PC-9 (cell line): ENCODE measurements at regions of chr17 and their contacts with region 1.

Region 1: GRCh38 chr17:65988081-65988850 is 203.7 kb downstream of the CEP112 start:
- DNase-seq: peak; percentile 8 to 60
- H3K4me3 ChIP-seq: no peak overlapping the region
- H3K27ac ChIP-seq: no peak overlapping the region
- H3K4me1 ChIP-seq: no peaks in the 10 kb centered on the region
- H3K27me3 ChIP-seq: no peaks in the 10 kb centered on the region
- CTCF ChIP-seq: peak; percentile 89

Region 2: GRCh38 chr17:64992325-64992811 is 995.9 kb before region 1 on chr17:
- CTCF ChIA-PET with region 1: interaction called, 19 read pairs
- POLR2A ChIA-PET with region 1: no interaction called
- intact Hi-C with region 1: no loop called
- DNase-seq: peak; percentile 95 to 99
- H3K4me3 ChIP-seq: no peak overlapping the region
- H3K27ac ChIP-seq: peak overlapping the region; percentile 86
- H3K4me1 ChIP-seq: peaks cover 60% of the 10 kb centered on the region
- H3K27me3 ChIP-seq: no peaks in the 10 kb centered on the region
- CTCF ChIP-seq: no peak

Region 3: GRCh38 chr17:65231662-65232335 is 756.5 kb before region 1 on chr17:
- CTCF ChIA-PET with region 1: no interaction called
- POLR2A ChIA-PET with region 1: no interaction called
- intact Hi-C with region 1: loop called (anchors 2 kb)
- DNase-seq: peak; percentile 63 to 78
- H3K4me3 ChIP-seq: no peak overlapping the region
- H3K27ac ChIP-seq: no peak overlapping the region
- H3K4me1 ChIP-seq: peaks cover 16% of the 10 kb centered on the region
- H3K27me3 ChIP-seq: no peaks in the 10 kb centered on the region
- CTCF ChIP-seq: peak; percentile 83

Region 4: GRCh38 chr17:65278050-65278819 is 710.0 kb before region 1 on chr17:
- CTCF ChIA-PET with region 1: no interaction called
- POLR2A ChIA-PET with region 1: no interaction called
- intact Hi-C with region 1: loop called (anchors 2 kb)
- DNase-seq: peak; percentile 20 to 46
- H3K4me3 ChIP-seq: no peak overlapping the region
- H3K27ac ChIP-seq: no peak overlapping the region
- H3K4me1 ChIP-seq: no peaks in the 10 kb centered on the region
- H3K27me3 ChIP-seq: no peaks in the 10 kb centered on the region
- CTCF ChIP-seq: peak; percentile 82

Region 5: GRCh38 chr17:65888649-65889048 is 99.6 kb before region 1 on chr17:
- CTCF ChIA-PET with region 1: no interaction called
- POLR2A ChIA-PET with region 1: no interaction called
- intact Hi-C with region 1: no loop called
- DNase-seq: no peak
- H3K4me3 ChIP-seq: no peak overlapping the region
- H3K27ac ChIP-seq: no peak overlapping the region
- H3K4me1 ChIP-seq: no peaks in the 10 kb centered on the region
- H3K27me3 ChIP-seq: no peaks in the 10 kb centered on the region
- CTCF ChIP-seq: no peak

Region 6: GRCh38 chr17:66191593-66192382 is 203.5 kb after region 1 on chr17 and contains the start of gene CEP112:
- CTCF ChIA-PET with region 1: no interaction called
- POLR2A ChIA-PET with region 1: no interaction called
- intact Hi-C with region 1: no loop called
- DNase-seq: peak in 1 of 2 experiments; percentile 73
- H3K4me3 ChIP-seq: peak within 1 kb of the TSS; percentile 91
- H3K27ac ChIP-seq: no peak within 1 kb of the TSS
- H3K4me1 ChIP-seq: peaks cover 15% of the 10 kb centered on the region
- H3K27me3 ChIP-seq: no peaks in the 10 kb centered on the region
- CTCF ChIP-seq: no peak
- total RNA-seq, gene CEP112: 4.3 and 6.3 TPM in 2 replicates